Ascending aorta (tissue), 2 donors: ENCODE measurements at regions of chr19 and their contacts with region 1.

Region 1: GRCh38 chr19:9435279-9436268 is at the start of gene ZNF266:
- DNase-seq: peak; percentile 49 to 93
- H3K4me3 ChIP-seq: peak within 1 kb of the TSS; percentile 82 to 87
- H3K27ac ChIP-seq: peak within 1 kb of the TSS; percentile 84 to 85
- H3K4me1 ChIP-seq: peaks cover 6 to 12% of the 10 kb centered on the region in 2 donors
- H3K27me3 ChIP-seq: no peaks in the 10 kb centered on the region
- CTCF ChIP-seq: peak; percentile 75 to 86 (median 78)
- total RNA-seq, gene ZNF266: 54.2 TPM

Region 2: DNA sequence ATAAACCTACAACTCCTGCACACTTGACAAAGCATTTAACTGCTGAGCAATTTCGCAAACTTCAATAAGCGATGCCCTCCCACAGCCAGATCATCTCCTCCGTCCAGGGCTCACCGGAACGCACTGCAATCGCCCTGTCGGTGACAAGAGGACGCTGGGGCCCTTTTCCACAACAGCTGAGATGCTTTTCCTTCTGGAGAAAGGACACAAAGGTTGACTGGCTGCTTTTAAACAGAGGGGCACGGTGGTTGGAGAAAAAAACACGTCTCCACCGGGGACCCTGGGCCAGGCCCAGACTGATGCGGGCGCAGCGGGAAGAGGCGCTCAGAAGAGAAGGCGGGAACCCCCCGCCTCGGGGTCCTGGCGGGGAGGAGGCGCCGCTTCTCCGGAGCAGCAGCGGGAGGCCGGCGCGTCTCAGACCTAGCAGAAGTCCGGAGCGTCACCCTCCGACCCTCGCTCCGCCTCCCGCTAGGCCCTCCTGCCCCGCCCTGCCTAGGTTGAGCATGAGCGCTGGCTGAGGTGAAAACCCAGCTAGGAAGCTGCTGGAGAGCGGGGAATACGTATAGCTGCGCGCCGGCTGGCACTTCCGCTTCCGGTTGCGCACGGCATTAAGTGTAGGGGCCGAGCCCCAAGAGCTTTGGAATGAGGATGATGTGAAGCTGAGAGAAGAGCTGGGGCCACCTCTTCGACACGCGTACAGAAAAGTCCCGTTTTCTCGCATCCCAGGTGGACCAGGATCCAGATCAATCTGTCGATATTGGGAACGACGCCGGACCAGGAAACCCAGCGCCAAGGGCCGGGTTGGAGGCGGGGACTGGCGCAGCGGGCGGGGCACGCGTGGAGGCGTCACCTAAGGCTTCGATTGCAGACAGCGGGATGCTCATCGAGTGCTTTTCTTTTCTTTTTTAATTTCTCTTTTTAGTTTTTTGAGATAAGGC is 332.9 kb after region 1 on chr19 and contains the start of gene ZNF846:
- intact Hi-C with region 1: loop called (anchors 10 kb)
- DNase-seq: peak; percentile 69 to 95
- H3K4me3 ChIP-seq: peak within 1 kb of the TSS; percentile 77 to 94
- H3K27ac ChIP-seq: peak within 1 kb of the TSS; percentile 92 to 94
- H3K4me1 ChIP-seq: peaks cover 3 to 14% of the 10 kb centered on the region in 2 donors
- H3K27me3 ChIP-seq: no peaks in the 10 kb centered on the region
- CTCF ChIP-seq: no peak
- total RNA-seq, gene ZNF846: 1.9 TPM

Region 3: GRCh38 chr19:9986787-9987281 is 551.3 kb after region 1 on chr19:
- intact Hi-C with region 1: no loop called
- DNase-seq: peak in 1 of 2 donors; percentile 84
- H3K4me3 ChIP-seq: no peak overlapping the region
- H3K27ac ChIP-seq: peak overlapping the region; percentile 63 to 67
- H3K4me1 ChIP-seq: peaks cover 4 to 11% of the 10 kb centered on the region in 2 donors
- H3K27me3 ChIP-seq: no peaks in the 10 kb centered on the region
- CTCF ChIP-seq: no peak